ENCODE measurements at regions of chr4 and their contacts with region 1.

Region 1: DNA sequence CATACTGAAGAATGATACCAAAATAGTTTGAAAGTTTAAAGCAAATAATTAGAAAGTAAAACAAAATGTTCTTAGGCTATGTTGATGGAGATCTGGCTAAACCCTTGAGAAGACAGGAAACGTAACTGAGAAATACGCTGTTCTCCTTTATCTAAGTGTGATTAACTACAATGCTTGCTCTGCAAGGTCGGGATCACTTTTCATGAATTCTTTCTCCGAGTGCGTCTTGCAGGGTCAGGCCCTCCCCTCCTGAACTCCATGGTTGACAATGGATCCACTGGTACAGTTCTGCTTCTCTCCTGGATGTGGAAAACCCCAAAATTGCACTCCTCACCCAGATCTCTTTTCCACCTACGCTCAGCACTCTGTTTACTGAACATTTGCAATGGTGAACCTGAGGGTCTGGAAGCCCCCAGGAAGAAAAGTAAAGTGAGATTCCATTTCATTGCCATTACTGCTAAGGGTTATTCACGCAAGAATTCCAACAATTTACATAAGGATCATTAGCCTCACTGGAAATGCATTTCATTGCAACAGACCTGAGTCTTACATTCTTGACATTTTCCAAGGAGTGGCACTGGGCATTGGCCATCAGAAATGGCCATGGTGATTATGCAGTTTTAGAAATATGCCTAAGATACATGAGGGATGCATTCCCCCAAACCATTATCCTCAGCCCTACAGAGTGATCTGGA is 24.6 kb upstream of the WWC2 start:
- DNase-seq: no peak

Region 2: DNA sequence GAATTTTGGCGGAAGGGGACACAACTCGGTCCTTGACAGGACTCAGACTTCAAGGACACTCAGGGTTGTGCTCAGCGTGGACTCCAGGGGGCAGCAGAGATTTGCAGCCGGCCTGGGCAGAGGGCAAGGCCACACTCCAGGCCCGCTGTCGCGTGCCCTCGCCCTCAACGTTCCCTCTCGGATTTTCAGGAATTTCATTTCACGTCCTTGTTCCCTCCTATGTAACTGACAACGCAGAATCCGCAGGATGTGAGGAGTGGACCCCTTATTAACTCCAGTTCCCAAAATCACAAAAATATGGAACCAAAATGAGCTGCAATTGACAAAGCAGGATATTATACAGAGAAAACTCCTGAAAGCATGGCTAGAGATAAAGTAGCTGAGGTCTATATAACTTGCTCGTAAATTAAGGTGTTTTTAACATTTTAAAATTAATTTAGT is 136.2 kb before region 1 on chr4:
- intact Hi-C with region 1: loop called (anchors 10 kb)
- DNase-seq: peak; percentile 35 to 87 (median 74)

Region 3: GRCh38 chr4:183182873-183183725 is 108.7 kb after region 1 on chr4:
- intact Hi-C with region 1: no loop called
- DNase-seq: no peak

Region 4: DNA sequence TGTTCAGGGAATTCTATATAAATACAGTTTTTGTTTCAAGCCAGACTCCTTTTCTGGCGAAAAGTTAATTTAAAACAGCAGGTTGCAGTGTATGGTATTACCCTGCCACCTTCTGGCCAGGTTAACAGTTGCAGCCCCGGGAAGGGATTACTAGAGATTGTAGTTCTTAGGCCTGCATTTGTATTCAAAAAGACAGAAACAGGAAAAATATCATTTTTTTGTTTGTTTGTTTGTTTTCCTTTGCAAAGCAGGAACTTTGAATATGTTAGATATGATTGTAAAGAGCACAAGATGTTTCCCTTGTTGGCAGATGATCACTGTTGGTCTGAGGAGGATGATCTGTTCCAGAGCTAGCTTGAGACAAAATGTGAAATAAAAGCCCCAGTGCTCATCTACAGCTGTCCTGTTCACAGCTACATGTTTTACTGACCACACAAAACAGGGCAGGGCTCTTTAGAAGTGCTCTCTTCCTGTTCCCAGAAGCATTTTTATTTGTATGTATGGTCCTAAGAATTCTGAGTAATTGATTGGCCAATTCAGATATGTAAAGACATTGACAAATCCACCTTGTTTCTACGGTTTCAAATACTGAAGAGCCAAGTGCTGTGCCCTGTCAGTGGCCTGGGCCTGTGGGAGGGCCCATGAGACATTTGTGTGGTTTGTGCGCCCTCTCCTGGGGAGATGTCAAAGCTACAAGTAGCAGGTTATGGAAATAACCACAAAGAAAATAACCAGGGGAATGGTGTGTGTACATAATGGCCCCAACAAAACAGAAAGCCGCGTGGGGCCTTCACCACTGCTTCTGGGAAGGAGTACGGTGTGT is 187.7 kb after region 1 on chr4:
- intact Hi-C with region 1: loop called (anchors 5 kb)
- DNase-seq: peak; percentile 68 to 93 (median 85)

Region 5: DNA sequence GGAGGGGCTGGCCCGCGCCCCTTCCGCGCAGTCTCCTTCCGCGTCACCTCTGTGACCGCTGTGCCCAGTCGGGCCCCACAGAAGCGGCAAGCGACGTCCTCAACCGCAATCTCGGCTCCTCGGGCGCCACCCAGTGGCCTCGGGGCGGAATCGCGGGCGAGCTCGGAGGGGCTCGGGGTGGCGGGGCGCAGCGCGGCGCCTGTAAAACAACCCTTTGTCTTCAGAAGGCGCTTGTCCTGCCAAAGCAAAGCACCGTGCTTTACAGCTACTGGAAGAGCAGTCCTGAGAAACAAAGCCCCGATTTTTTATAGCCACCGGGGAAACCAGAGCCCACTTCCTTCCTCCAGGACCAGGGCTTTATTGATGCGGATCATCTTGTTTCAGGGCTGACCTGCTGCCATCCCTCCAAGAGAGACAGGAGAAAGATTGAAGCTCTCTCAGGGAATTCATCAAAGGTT is 332.7 kb after region 1 on chr4:
- intact Hi-C with region 1: loop called (anchors 10 kb)
- DNase-seq: peak; percentile 78 to 97 (median 92)